ENCODE measurements at regions of chr6 and their contacts with region 1.

Region 1: GRCh38 chr6:30877419-30878371 is 6.6 kb upstream of the DDR1 start:
- DNase-seq: peak; percentile 85
- ATAC-seq: peak; percentile 90
- H3K4me3 Mint-ChIP-seq: peak overlapping the region; percentile 68
- H3K27ac Mint-ChIP-seq: peak overlapping the region; percentile 72
- H3K4me1 Mint-ChIP-seq: peaks cover 26% of the 10 kb centered on the region
- H3K27me3 Mint-ChIP-seq: peaks cover 6% of the 10 kb centered on the region

Region 2: DNA sequence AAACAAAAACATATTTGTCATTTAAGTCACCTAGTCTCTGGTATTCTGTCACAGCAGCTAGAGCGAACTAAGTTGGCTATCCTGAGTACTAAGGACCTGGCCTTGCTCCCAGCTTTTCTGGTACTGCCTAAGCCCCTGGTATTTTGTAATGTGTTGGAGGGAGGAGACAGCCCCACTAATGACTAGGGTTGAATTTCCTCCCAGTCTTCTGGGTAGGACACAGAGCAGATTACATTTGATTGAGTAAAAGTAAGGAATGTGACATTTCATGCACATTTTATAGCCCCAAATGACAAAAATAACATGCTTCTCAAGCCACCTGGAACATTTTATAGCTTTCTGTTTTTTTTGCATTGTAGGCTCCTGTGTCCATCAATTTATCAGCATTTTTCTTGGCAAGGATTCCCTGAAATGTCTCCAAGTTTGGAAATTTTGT is 41.2 kb before region 1 on chr6:
- CTCF ChIA-PET with region 1: interaction called, 116 read pairs
- POLR2A ChIA-PET with region 1: interaction called, 3 read pairs
- DNase-seq: no peak
- ATAC-seq: no peak
- H3K4me3 Mint-ChIP-seq: no peak overlapping the region
- H3K27ac Mint-ChIP-seq: no peak overlapping the region
- H3K4me1 Mint-ChIP-seq: peaks cover 51% of the 10 kb centered on the region
- H3K27me3 Mint-ChIP-seq: no peaks in the 10 kb centered on the region

Region 3: DNA sequence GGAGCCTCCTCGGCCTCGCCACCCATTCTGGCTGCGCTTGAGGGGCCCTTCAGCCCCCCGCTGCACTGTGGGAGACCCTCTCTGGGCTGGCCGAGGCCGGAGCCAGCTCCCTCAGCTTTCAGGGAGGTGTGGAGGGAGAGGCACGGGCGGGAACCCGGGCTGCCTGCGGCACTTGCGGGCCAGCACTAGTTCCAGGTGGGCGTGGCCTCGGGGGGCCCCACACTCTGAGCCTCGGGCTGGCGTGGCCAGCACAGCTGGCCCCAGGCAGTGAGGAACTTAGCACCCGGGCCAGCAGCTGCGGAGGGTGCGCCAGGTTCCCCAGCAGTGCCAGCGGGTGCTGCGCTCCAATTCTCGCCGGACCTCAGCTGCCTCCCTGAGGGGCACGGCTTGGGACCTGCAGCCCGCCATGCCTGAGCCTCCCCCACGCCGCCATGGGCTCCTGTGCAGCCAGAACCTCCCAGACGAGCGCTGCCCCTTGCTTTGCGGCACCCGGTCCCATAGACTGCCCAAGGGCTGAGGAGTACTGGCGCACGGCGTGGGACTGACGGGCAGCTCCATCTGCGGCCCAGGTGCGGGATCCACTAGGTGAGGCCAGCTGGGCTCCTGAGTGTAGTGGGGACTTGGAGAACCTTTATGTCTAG is 139.1 kb after region 1 on chr6:
- CTCF ChIA-PET with region 1: no interaction called
- POLR2A ChIA-PET with region 1: no interaction called
- DNase-seq: no peak
- ATAC-seq: no peak
- H3K4me3 Mint-ChIP-seq: no peak overlapping the region
- H3K27ac Mint-ChIP-seq: no peak overlapping the region
- H3K4me1 Mint-ChIP-seq: no peaks in the 10 kb centered on the region
- H3K27me3 Mint-ChIP-seq: peaks cover 21% of the 10 kb centered on the region

Measured in activated CD8-positive, alpha-beta T cell treated with anti-CD3 and anti-CD28 coated beads, Interleukin-2, amount 10 ng/mL, durations not matched to agents 7 days and 5 days (primary cell).